Tibial artery (tissue), 4 donors: ENCODE measurements at regions of chr1 and their contacts with region 1.

Region 1: DNA sequence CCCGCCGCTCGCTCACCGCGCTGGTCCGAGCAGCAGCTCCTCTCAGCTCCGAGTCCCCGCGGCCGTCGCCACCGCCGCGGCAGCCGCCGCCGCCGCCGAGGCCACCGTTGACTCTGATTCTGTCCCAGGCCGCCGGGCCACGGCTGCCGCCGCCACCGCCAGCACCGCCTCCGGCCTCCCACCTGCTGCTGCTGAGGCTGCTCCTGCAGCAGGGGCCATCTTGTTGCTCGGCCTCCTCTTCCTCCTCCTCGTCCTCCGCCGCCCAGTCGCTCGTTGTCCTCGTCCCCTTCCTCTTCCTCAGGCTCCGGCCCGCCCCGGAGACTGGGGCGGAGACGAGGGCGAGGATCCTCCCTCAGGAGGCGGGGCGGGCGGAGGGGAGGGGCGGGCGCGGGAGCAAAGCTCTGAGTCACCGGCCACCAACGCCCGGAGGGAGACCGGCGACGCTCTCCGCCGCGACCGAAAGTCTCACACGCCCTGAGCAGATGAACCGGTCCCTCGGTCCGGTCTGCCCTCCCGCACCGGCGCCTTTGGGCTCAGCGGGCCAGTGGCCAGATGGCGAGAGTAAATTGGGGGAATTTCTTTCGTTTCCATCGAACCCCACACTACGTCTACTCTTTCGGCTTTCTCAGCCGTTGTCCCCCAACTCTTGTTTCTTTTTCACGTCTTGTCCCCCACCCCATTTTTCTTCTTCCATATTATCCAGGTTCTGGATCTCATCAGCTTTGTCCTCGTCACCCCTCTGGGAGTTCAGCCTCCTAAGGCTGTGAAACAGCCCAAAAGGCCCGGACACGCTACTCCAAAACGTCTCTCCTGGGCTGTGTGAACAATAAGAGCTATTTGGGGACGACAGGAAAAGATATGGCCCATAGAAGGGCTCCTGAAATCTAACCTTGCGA is at the start of gene RC3H1:
- DNase-seq: peak; percentile 89 to 94
- H3K4me3 ChIP-seq: peak within 1 kb of the TSS; percentile 79 to 86
- H3K27ac ChIP-seq: peak within 1 kb of the TSS; percentile 87 to 91
- H3K4me1 ChIP-seq: peaks cover 0 to 46% (median 20%) of the 10 kb centered on the region in 4 donors
- H3K27me3 ChIP-seq: no peaks in the 10 kb centered on the region
- CTCF ChIP-seq: no peak

Region 2: DNA sequence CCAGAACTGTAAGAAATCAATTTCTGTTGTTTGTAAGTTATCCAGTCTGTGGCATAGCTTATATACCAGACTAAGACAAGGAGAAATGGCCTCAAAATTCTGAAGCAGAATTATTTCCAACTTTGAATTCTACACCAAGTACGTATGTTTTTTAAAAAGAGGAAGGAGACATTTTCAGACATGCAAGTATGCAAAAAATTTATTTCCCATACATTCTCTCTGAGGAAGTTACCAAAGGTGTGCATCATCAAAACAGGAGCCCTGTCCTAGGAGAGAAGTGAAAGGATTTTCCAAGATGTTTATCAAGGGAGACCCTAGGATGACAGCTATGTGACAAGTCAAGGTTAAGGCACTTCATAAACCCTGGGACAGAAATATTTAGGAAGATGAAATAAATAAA is 87.7 kb after region 1 on chr1:
- intact Hi-C with region 1: no loop called
- DNase-seq: no peak
- H3K4me3 ChIP-seq: no peak overlapping the region
- H3K27ac ChIP-seq: no peak overlapping the region
- H3K4me1 ChIP-seq: peaks cover 0 to 8% (median 0%) of the 10 kb centered on the region in 4 donors
- H3K27me3 ChIP-seq: no peaks in the 10 kb centered on the region
- CTCF ChIP-seq: no peak

Region 3: DNA sequence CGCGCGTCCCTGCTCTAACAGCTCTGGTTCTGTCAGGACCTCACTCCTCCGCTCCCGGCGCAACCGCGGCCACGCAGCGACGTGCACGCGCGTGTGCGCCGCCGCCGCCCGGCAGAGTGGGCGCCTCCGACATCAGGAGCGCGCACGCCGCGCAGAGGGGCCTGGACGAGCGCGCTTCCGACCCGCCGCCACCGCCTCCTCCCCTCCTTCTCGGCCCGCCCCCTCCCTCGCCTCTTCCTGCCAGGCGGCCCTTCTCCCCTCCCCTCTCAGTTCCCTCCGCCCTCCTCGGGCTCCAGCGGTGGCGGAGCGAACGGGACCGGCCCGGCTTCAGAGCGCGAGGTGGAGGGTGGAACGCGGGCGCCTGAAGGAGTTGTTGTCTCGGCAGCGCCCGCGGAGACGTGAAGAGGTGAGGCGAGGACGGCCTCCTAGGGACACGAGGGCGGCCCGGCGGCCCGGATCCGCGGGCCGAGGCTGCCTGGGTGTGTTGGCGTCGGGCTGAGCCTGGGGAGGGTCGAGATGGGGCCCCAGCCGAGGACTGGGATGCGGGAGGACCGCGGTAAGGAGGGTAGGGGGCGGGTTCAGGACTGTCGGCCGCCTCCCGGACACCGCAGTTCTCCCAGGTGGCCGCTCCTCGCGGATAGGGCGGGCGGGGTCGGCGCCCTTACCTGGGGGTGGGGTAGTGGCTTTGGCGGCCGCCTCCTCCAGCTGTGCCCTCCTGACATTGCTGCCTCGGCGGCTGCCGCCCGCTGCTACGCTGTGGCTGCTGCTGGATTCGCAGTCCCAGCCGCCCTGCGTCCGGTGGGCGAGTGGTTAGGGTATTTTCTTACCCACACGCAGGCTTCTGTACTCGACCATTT is 137.2 kb after region 1 on chr1 and contains the start of gene RABGAP1L:
- intact Hi-C with region 1: loop called (anchors 5 kb)
- DNase-seq: peak; percentile 92 to 97
- H3K4me3 ChIP-seq: peak within 1 kb of the TSS; percentile 84 to 95
- H3K27ac ChIP-seq: peak within 1 kb of the TSS; percentile 86 to 89
- H3K4me1 ChIP-seq: peaks cover 0 to 13% (median 4%) of the 10 kb centered on the region in 4 donors
- H3K27me3 ChIP-seq: no peaks in the 10 kb centered on the region
- CTCF ChIP-seq: no peak